ENCODE measurements at regions of chr10 and their contacts with region 1.

Region 1: GRCh38 chr10:77710759-77711682 is 73.4 kb upstream of the KCNMA1 start:
- DNase-seq: peak; percentile 41 to 82 (median 60)
- ATAC-seq: peak; percentile 99
- H3K4me3 ChIP-seq: peak overlapping the region; percentile 49
- H3K4me3 Mint-ChIP-seq: peak overlapping the region; percentile 71
- H3K27ac ChIP-seq: no peak overlapping the region
- H3K27ac Mint-ChIP-seq: no peak overlapping the region
- H3K4me1 ChIP-seq: peaks cover 15% of the 10 kb centered on the region
- H3K4me1 Mint-ChIP-seq: peaks cover 5% of the 10 kb centered on the region
- H3K27me3 ChIP-seq: peaks cover 5 to 10% of the 10 kb centered on the region in 2 experiments
- H3K27me3 Mint-ChIP-seq: peaks cover 35% of the 10 kb centered on the region
- CTCF ChIP-seq: peak; percentile 83

Region 2: DNA sequence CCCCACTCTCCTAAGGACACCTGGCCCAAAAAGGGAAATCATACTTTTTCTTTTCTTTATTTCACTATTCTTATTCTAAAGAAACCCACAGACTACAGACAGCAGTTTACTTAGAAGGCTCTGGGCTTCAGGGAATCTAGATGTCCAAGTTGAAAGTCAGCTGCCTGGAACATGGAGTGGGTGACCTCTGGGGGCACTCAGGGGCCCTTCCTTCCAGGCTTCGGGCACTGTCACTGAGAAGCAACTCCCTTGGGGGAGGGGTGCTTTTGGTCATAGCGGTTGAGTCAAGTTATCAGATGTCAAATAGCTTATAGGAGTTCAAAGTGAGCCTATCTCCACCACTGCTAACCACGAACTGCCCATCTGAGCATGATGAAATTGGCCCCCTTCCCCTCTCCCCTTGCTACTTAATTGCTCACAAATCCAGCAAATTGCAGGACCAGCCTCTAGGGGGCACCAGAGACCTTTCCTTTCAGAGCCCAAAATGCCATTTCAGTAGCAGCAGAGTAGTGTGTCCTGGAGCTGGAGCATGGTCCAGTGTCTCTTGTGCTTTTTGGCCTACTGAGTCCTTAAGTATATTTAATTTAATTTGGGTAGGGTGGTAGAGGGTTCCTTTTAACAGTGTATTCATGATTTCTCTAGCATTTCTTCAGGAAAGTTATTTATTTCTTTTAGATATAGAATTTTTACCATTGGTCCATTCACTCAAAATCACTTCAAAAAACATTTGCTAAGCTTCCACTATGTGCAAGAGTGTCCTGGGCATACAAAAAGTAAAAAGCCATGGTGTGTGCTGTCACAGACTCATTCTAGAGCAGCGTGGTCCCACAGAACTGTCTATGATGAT is 537.2 kb before region 1 on chr10:
- CTCF ChIA-PET with region 1: interaction called, 4 read pairs
- POLR2A ChIA-PET with region 1: no interaction called
- intact Hi-C with region 1: loop called (anchors 1 to 5 kb)
- DNase-seq: peak; percentile 19 to 76 (median 44)
- ATAC-seq: no peak
- H3K4me3 ChIP-seq: no peak overlapping the region
- H3K4me3 Mint-ChIP-seq: no peak overlapping the region
- H3K27ac ChIP-seq: no peak overlapping the region
- H3K27ac Mint-ChIP-seq: no peak overlapping the region
- H3K4me1 ChIP-seq: no peaks in the 10 kb centered on the region
- H3K4me1 Mint-ChIP-seq: no peaks in the 10 kb centered on the region
- H3K27me3 ChIP-seq: no peaks in the 10 kb centered on the region
- H3K27me3 Mint-ChIP-seq: peaks cover 27% of the 10 kb centered on the region
- CTCF ChIP-seq: peak; percentile 88

Measured in CD4-positive, alpha-beta T cell (primary cell).